ENCODE measurements at regions of chr4 and their contacts with region 1.

Region 1: DNA sequence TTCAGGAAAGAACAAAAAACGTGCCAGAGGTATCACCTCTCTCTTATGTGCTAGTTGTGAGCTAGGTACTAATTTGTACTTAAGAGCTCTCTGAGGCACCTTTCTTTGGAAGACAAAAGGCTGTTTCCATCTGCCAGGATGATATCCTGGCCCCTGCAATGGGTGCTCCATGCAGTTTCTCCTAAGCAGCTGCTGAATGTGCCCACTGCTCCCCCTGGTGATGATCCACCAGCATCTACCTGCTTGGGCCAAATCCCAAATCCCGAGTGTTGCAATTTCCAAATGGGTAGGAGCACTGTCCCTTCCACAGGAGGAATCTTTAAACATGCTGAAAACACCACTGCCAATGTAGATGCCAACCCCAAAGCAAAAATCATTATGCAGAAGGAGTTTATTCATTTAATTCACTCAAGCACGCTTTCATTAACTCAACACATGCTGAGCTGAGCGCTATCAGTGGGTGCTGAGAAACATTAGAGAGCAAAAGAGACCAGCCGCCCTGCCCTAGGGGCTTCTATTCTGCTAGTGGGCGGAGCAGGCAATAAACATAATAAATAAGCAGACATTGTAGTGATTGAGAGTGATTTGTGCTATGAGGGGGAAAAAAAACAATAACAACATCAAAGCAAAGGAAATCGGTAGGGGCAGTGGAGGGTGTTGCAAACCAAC is 69.6 kb upstream of the C4orf50 start:
- DNase-seq: peak in 1 of 2 experiments; percentile 29
- H3K4me3 ChIP-seq: no peak overlapping the region
- H3K27ac ChIP-seq: no peak overlapping the region
- H3K4me1 ChIP-seq: no peaks in the 10 kb centered on the region
- H3K27me3 ChIP-seq: peaks cover 48% of the 10 kb centered on the region
- CTCF ChIP-seq: 0 out of 2 replicates have a peak, but pooled peaks have one; percentile 32

Region 2: DNA sequence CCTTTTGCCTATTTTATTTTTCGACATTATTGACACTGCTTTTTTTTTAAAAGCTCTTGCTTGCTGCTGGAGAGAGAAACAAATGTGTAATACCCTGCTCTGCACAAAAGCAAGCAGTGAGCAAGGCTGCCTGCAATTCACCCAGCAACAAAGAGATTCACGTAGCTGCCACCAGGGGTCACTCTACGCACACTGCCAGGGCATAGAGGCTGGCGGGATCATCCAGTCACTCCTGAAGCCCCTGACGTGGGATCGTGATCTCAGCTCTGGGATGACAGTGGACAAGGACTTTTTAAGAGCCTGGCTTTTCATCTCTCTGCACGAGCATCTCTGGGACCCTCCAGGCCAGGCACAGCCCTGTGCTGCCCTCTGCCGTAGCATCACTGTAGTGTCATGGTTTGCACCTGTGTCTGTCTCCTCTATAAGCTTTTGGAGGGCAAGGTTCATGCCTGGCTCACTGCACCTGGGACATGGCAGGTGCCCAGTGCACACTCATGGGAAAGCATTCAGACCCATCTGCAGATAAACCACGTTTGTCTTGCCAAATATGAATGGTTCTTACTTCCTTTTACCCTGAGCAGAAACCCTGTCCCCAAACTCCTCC is 89.4 kb before region 1 on chr4:
- CTCF ChIA-PET with region 1: interaction called, 10 read pairs
- POLR2A ChIA-PET with region 1: no interaction called
- intact Hi-C with region 1: loop called (anchors 1 kb)
- DNase-seq: peak in 1 of 2 experiments; percentile 58
- H3K4me3 ChIP-seq: no peak overlapping the region
- H3K27ac ChIP-seq: no peak overlapping the region
- H3K4me1 ChIP-seq: no peaks in the 10 kb centered on the region
- H3K27me3 ChIP-seq: peaks cover 36% of the 10 kb centered on the region
- CTCF ChIP-seq: peak; percentile 87

Region 3: DNA sequence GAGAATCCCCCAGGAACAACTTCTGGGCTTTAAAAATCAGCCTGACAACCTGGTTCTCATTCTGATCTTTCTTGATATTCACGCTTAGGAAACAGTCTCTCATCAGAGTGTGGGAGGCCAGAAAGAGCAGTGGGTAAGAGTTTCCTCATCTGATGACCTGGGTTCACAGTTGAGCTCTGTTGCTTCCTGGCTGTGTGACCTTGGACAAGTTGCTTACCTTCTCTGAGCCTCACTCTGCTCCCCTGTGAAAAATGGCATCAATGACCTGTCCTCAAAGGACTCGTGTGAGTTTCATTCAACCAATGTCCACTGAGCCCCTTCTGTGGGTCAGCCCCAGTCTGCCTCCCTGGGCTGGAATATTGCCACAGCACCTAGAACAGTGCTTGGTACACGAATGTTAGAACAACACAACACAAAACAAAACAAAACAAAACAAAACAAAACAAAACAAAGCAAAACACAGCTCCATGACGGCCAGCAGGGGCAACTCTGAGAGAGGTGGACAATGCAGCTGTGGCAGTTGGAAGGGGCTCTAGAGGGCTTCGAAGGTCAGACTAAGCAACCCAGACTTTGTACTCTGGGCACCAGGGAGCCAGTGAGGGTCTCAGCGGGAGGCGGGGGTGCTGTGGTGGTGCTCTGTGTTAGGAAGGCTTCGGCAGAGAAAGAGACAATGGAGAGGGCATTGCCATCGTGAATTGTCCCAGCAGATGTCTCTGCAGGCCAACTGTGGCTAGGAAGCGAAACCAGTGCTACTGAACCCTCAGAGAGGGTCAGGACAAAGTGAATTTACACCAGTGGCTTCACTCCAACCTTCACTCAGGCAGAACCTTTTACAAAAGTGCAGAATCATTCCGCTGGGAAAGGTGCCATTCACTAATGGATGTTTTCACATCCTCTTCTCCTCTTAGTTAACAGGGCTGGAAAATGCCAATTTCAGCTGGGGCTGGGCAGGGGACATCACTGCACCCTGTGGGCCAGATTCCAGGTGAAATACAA is 55.3 kb before region 1 on chr4:
- CTCF ChIA-PET with region 1: no interaction called
- POLR2A ChIA-PET with region 1: no interaction called
- intact Hi-C with region 1: loop called (anchors 1 kb)
- DNase-seq: peak in 1 of 2 experiments; percentile 22
- H3K4me3 ChIP-seq: no peak overlapping the region
- H3K27ac ChIP-seq: no peak overlapping the region
- H3K4me1 ChIP-seq: no peaks in the 10 kb centered on the region
- H3K27me3 ChIP-seq: peaks cover 87% of the 10 kb centered on the region
- CTCF ChIP-seq: no peak

Region 4: GRCh38 chr4:6052679-6053078 is 35.1 kb before region 1 on chr4:
- CTCF ChIA-PET with region 1: interaction called, 21 read pairs
- POLR2A ChIA-PET with region 1: no interaction called
- intact Hi-C with region 1: no loop called
- DNase-seq: peak in 1 of 2 experiments; percentile 28
- H3K4me3 ChIP-seq: no peak overlapping the region
- H3K27ac ChIP-seq: no peak overlapping the region
- H3K4me1 ChIP-seq: no peaks in the 10 kb centered on the region
- H3K27me3 ChIP-seq: peaks cover 47% of the 10 kb centered on the region
- CTCF ChIP-seq: no peak